ENCODE measurements at regions of chr11 and their contacts with region 1.

Region 1: DNA sequence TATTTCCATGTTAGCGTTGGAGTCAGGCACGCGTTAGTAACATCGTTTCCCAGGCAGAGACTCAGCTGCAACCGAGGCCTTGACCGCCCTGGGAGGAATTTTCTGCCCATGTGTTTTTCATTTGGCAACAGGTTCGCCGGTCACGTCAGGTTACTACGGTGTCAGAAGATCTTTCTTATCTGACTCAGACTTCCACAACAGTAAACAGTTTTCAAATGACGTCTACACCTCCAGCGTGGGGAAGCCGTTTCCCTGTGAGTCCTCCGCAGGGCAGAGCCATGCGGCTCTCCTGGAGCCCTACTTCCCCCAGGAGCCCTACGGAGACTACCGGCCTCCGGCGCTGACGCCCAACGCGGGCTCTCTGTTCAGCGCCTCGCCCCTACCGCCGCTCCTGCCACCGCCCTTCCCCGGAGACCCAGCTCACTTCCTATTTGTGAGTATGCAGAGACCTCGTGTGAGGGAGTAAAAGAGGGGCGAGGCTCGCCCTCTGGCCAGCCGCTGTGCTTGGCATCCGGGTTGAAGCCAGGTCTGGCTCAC is 14.3 kb upstream of the POU2AF3 start:
- DNase-seq: no peak
- H3K4me3 Mint-ChIP-seq: no peak overlapping the region
- H3K27ac Mint-ChIP-seq: no peak overlapping the region
- H3K4me1 Mint-ChIP-seq: no peaks in the 10 kb centered on the region
- H3K27me3 Mint-ChIP-seq: no peaks in the 10 kb centered on the region

Region 2: GRCh38 chr11:111422494-111423249 is 138.7 kb after region 1 on chr11:
- CTCF ChIA-PET with region 1: interaction called, 210 read pairs
- intact Hi-C with region 1: loop called (anchors 1 kb)
- DNase-seq: peak; percentile 70
- H3K4me3 Mint-ChIP-seq: no peak overlapping the region
- H3K27ac Mint-ChIP-seq: no peak overlapping the region
- H3K4me1 Mint-ChIP-seq: peaks cover 7% of the 10 kb centered on the region
- H3K27me3 Mint-ChIP-seq: no peaks in the 10 kb centered on the region

Region 3: GRCh38 chr11:111441443-111441842 is 157.4 kb after region 1 on chr11:
- CTCF ChIA-PET with region 1: interaction called, 51 read pairs
- intact Hi-C with region 1: loop called (anchors 1 kb)
- DNase-seq: peak; percentile 35
- H3K4me3 Mint-ChIP-seq: no peak overlapping the region
- H3K27ac Mint-ChIP-seq: no peak overlapping the region
- H3K4me1 Mint-ChIP-seq: peaks cover 20% of the 10 kb centered on the region
- H3K27me3 Mint-ChIP-seq: peaks cover 1% of the 10 kb centered on the region

Region 4: GRCh38 chr11:111557425-111558111 is 273.6 kb after region 1 on chr11:
- CTCF ChIA-PET with region 1: no interaction called
- intact Hi-C with region 1: loop called (anchors 10 kb)
- DNase-seq: no peak
- H3K4me3 Mint-ChIP-seq: no peak overlapping the region
- H3K27ac Mint-ChIP-seq: no peak overlapping the region
- H3K4me1 Mint-ChIP-seq: peaks cover 7% of the 10 kb centered on the region
- H3K27me3 Mint-ChIP-seq: peaks cover 8% of the 10 kb centered on the region